Pancreas (tissue), 10 donors: ENCODE measurements at regions of chr1 and their contacts with region 1.

Region 1: GRCh38 chr1:37486680-37487618 is 12.6 kb downstream of the ZC3H12A start:
- DNase-seq: peak; percentile 57 to 94 (median 83)
- ATAC-seq: peak; percentile 44 to 83 (median 78)
- H3K4me3 ChIP-seq: no peak overlapping the region
- H3K27ac ChIP-seq: peak overlapping the region in 3 of 4 donors; percentile 33 to 78 (median 76)
- H3K4me1 ChIP-seq: peaks cover 21 to 46% (median 36%) of the 10 kb centered on the region in 3 donors
- H3K27me3 ChIP-seq: no peaks in the 10 kb centered on the region
- CTCF ChIP-seq: peak; percentile 93 to 98 (median 96)

Region 2: DNA sequence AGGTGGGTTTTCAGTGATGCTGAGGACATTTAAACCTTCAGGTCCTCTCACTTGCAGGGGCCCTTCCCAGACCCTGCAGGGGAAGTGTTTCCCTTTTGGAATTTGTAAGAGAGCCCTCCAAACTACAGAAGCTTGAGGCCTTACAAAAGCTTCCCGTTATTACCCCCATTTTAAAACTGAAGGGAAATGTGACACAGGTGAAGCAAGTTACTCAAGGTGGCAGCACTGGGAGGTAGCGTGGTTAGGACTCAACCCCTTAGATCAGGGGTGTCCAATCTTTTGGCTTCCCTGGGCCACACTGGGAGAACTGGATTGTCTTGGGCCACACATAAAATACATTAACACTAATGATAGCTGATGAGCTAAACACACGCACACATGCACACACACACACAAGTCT is 28.4 kb before region 1 on chr1:
- intact Hi-C with region 1: loop called in 1 of 3 experiments (anchors 2 kb)
- DNase-seq: no peak
- ATAC-seq: no peak
- H3K4me3 ChIP-seq: no peak overlapping the region
- H3K27ac ChIP-seq: no peak overlapping the region
- H3K4me1 ChIP-seq: peaks cover 0 to 3% (median 0%) of the 10 kb centered on the region in 3 donors
- H3K27me3 ChIP-seq: no peaks in the 10 kb centered on the region
- CTCF ChIP-seq: no peak